H1 (cell line): ENCODE measurements at regions of chr6 and their contacts with region 1.

Region 1: DNA sequence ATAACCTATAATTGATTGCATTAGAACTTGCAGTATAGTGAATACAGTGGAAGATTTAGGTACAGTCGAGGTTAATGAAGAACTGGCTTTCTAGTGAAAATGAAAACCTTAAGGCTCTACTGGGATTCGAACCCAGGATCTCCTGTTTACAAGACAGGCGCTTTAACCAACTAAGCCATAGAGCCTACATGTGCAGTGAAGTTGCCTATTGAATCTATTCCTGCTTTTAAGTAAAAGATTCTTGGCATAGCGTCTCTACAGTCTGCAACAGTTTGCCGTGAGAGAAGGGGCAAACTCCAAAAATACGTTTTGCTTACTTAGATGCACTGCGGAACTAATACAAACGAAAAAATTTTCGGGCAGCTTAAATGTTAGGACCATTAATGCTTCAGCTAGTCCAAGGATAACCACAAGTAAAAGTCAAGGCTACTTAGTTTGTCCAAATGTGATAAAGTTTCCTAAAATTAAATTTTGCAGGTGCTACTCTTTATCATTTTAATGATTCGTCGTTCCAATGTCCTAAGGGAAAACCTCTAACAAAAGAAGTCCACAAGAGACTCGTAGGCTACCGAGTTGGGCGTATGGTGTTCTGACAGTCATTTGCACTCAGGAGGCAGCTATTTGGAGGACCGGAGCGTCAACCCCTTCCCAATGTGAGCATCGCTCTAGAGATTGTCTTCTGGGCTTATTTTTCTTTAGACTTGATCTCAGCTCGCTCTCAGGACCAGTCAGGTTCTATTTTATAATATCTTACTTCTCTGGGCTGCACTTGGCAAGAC is 31.3 kb upstream of the ZSCAN23 start:
- DNase-seq: peak; percentile 54
- H3K4me3 ChIP-seq: peak overlapping the region; percentile 72 to 88 (median 77)
- H3K27ac ChIP-seq: no peak overlapping the region
- H3K4me1 ChIP-seq: no peaks in the 10 kb centered on the region
- H3K27me3 ChIP-seq: peaks cover 0 to 2% (median 0%) of the 10 kb centered on the region in 4 experiments; a peak in 1 of 7 replicates
- CTCF ChIP-seq: no peak
- EP300 ChIP-seq: no peak
- POLR2A ChIP-seq: no peak
- RAD21 ChIP-seq: no peak

Region 2: GRCh38 chr6:28489366-28490204 is 15.0 kb after region 1 on chr6:
- CTCF ChIA-PET with region 1: no interaction called
- POLR2A ChIA-PET with region 1: interaction called, 11 read pairs
- DNase-seq: peak; percentile 77 to 82
- H3K4me3 ChIP-seq: peak overlapping the region; percentile 69 to 80 (median 76)
- H3K27ac ChIP-seq: peak overlapping the region; percentile 34; the same call in 1 of the 2 replicates
- H3K4me1 ChIP-seq: peaks cover 0 to 6% (median 2%) of the 10 kb centered on the region in 4 experiments; a peak in 2 of 7 replicates
- H3K27me3 ChIP-seq: peaks cover 0 to 2% (median 0%) of the 10 kb centered on the region in 4 experiments; a peak in 2 of 7 replicates
- CTCF ChIP-seq: no peak
- EP300 ChIP-seq: 0 out of 3 replicates have a peak, but pooled peaks of 1 of the 2 experiments have one; percentile 5
- POLR2A ChIP-seq: peak; percentile 52 to 75
- RAD21 ChIP-seq: no peak